WTC11 (cell line): ENCODE measurements at regions of chr11 and their contacts with region 1.

Region 1: DNA sequence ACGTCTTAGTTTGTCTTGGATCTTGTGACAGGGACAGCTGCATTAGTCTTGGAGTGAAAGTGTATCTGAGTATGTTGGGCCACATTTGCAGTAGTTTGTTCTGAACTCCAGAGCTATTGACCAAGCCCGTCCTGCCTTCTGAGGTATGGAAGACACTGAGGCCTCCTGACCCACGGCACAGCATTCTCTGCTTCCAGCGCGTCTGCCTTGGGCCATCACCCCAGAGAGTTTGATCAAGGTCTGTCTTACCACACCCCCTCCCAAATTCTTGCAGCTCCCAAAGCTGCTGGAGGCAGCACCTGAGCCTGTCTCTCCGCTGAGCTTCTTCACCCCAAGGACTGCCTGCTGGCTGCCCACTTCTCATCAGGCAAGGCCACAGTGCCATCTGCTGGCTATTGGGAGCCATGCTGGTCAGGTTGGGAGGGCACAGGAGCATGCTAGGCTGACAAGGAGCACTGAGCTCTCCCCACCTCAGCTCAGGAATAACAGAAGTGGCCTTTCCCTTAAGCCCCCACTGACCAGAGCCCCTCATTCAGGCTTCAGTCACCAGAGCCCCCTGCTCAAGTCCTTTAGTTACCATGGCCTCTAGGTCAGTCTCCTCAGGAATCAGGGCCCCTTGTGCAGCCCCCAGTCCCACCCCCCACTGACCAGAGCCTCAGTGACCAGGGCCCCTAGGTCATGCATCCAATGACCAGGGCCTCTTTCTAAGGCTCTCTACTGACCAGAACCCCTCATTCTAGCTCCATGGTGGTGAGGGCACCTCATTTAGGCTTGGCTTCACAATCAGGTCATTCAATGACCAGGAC is 27.2 kb upstream of the SMPD1 start:
- DNase-seq: peak; percentile 89
- ATAC-seq: peak; percentile 99
- H3K4me3 Mint-ChIP-seq: no peak overlapping the region
- H3K27ac Mint-ChIP-seq: no peak overlapping the region
- H3K4me1 Mint-ChIP-seq: peaks cover 4% of the 10 kb centered on the region; the same call in 1 of the 2 replicates
- H3K27me3 Mint-ChIP-seq: no peaks in the 10 kb centered on the region
- CTCF ChIP-seq: peak; percentile 76

Region 2: DNA sequence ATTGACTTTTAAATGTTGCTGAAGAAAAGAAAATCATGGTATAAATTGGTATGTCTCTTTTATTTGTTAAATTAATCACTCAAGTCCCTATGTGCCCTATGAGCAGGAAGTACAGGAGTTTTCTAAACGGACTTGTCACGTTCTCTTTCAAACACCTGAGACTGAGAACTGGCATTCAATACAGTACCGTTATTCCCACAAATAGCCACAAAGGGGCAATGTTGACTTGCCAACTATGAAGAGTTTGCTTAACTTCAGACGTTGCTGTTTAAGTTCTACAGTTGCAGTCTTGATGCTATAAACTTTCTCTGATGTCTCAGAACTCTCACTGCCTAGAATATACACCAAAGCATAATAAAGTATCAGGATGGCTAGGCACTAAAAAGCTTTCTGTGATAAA is 340.1 kb before region 1 on chr11:
- CTCF ChIA-PET with region 1: interaction called, 29 read pairs
- POLR2A ChIA-PET with region 1: no interaction called
- DNase-seq: no peak
- ATAC-seq: peak; percentile 93
- H3K4me3 Mint-ChIP-seq: no peak overlapping the region
- H3K27ac Mint-ChIP-seq: no peak overlapping the region
- H3K4me1 Mint-ChIP-seq: 0 out of 2 replicates have a peak, but pooled peaks cover 4% of the 10 kb centered on the region
- H3K27me3 Mint-ChIP-seq: peaks cover 26% of the 10 kb centered on the region
- CTCF ChIP-seq: no peak

Region 3: GRCh38 chr11:6269994-6270393 is 93.1 kb before region 1 on chr11:
- CTCF ChIA-PET with region 1: interaction called, 19 read pairs
- POLR2A ChIA-PET with region 1: no interaction called
- DNase-seq: peak; percentile 59
- ATAC-seq: peak; percentile 38
- H3K4me3 Mint-ChIP-seq: no peak overlapping the region
- H3K27ac Mint-ChIP-seq: no peak overlapping the region
- H3K4me1 Mint-ChIP-seq: peaks cover 7% of the 10 kb centered on the region; the same call in 1 of the 2 replicates
- H3K27me3 Mint-ChIP-seq: peaks cover 30% of the 10 kb centered on the region
- CTCF ChIP-seq: peak; percentile 60; the same call in 1 of the 2 replicates

Region 4: GRCh38 chr11:6315811-6316425 is 47.2 kb before region 1 on chr11:
- CTCF ChIA-PET with region 1: interaction called, 75 read pairs
- POLR2A ChIA-PET with region 1: no interaction called
- DNase-seq: peak; percentile 68
- ATAC-seq: peak; percentile 65
- H3K4me3 Mint-ChIP-seq: no peak overlapping the region
- H3K27ac Mint-ChIP-seq: no peak overlapping the region
- H3K4me1 Mint-ChIP-seq: peaks cover 22% of the 10 kb centered on the region
- H3K27me3 Mint-ChIP-seq: peaks cover 9% of the 10 kb centered on the region
- CTCF ChIP-seq: peak; percentile 69

Region 5: GRCh38 chr11:6389921-6390724 is 27.0 kb after region 1 on chr11 and contains the start of gene SMPD1:
- CTCF ChIA-PET with region 1: interaction called, 21 read pairs
- POLR2A ChIA-PET with region 1: no interaction called
- DNase-seq: peak; percentile 87
- ATAC-seq: peak; percentile 87
- H3K4me3 Mint-ChIP-seq: peak within 1 kb of the TSS; percentile 92
- H3K27ac Mint-ChIP-seq: peak within 1 kb of the TSS; percentile 96
- H3K4me1 Mint-ChIP-seq: peaks cover 32% of the 10 kb centered on the region
- H3K27me3 Mint-ChIP-seq: peaks cover 13% of the 10 kb centered on the region
- CTCF ChIP-seq: no peak
- total RNA-seq, gene SMPD1: 4.4 to 6.6 TPM (median 5.6 TPM) in 3 replicates

Region 6: GRCh38 chr11:6473481-6474422 is 110.7 kb after region 1 on chr11 and contains the start of gene TRIM3:
- CTCF ChIA-PET with region 1: interaction called, 22 read pairs
- POLR2A ChIA-PET with region 1: no interaction called
- DNase-seq: peak; percentile 91
- ATAC-seq: peak; percentile 49
- H3K4me3 Mint-ChIP-seq: peak within 1 kb of the TSS; percentile 79
- H3K27ac Mint-ChIP-seq: peak within 1 kb of the TSS; percentile 93
- H3K4me1 Mint-ChIP-seq: peaks cover 28% of the 10 kb centered on the region
- H3K27me3 Mint-ChIP-seq: peaks cover 12% of the 10 kb centered on the region
- CTCF ChIP-seq: no peak
- total RNA-seq, gene TRIM3: 16.6 to 21.3 TPM (median 19.0 TPM) in 3 replicates

Region 7: GRCh38 chr11:6596239-6596877 is 233.3 kb after region 1 on chr11:
- CTCF ChIA-PET with region 1: no interaction called
- POLR2A ChIA-PET with region 1: no interaction called
- DNase-seq: no peak
- ATAC-seq: no peak
- H3K4me3 Mint-ChIP-seq: no peak overlapping the region
- H3K27ac Mint-ChIP-seq: no peak overlapping the region
- H3K4me1 Mint-ChIP-seq: peaks cover 6% of the 10 kb centered on the region; the same call in 1 of the 2 replicates
- H3K27me3 Mint-ChIP-seq: no peaks in the 10 kb centered on the region
- CTCF ChIP-seq: no peak